Dendritic cell treated with granulocyte-macrophage colony-stimulating factor and Interleukin-4, amounts not matched to agents 40 ng/mL and 50 ng/mL, for 4 days (primary cell): ENCODE measurements at regions of chr15 and their contacts with region 1.

Region 1: DNA sequence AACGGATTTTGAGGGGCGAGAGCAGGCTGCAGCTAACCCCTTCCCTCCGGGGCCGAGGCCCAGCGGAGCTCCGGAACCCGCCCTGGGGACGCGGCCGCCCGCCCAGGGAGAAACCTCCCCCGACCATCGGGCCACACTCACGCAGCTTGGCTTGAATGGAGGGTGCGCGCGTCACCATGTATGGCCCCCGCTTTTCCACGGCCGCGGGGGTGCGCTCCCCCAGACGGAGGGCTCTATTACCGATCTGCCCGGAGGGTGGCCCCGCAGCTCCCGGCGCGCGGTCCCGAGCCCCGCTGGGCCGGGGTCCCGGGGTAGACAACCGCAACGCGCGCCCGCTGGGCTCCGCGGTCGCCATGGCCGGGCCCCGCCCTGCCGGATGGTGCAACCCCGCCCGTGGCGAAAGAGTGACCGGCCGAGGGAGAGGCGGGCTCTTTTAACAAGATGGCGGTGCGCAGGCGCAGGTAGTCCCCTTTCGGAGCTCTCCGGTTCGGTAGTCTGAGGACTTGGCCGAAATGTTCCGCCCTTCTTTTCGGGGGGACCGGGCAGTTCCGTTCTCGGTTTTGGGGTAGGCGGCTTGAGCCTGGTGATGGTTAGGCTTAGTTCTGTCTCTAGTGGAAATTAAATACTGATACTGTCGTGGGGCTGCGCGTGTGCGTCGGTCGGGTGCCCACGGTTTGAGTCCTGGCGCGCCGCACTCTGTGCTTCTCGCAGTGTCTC is at the start of gene FAM219B:
- H3K4me3 Mint-ChIP-seq: peak within 1 kb of the TSS; percentile 91
- H3K27ac Mint-ChIP-seq: peak within 1 kb of the TSS; percentile 87
- H3K4me1 Mint-ChIP-seq: peaks cover 49% of the 10 kb centered on the region
- H3K27me3 Mint-ChIP-seq: no peaks in the 10 kb centered on the region

Region 2: DNA sequence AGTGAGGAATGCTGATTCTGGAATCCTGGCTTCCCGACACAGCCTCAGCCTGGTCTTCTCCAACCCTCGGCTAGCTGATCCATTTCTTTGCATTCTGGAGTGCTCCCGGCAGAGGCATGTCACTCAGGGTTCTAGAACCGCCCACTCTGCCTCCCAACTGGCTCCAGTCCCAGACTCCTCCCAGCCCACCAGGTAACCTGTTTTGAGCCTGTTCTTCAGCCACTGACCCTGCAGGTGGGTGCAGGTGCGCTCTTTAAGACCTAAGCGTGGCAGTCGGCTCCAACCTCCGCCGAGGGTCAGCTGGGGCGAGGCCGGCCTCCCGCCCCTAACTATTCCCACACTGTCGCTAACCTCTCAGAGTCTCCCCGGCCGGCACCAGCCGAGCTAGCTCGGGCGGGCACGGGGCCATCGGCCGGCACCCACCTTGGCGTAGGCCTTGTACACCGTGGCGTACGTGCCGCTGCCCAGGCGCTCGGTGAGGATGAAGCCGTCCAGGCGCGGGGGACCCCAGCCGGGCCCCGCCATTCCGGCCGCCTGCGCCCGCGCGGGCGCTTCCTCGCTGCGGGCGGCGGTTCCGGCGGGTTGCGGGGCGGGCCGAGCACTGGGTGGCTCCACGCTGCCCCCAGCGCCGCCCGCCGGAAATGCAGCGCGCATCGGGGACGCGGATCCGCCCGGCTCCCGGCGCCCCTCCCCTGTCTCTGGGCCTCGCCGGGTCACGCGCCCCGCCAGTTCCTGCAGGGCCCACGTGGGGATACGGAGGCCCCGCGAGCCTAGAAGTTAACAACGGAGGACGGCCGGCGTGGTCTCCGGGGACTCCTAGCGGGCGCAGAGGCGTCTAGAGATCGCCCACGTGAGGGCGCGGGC is 63.8 kb before region 1 on chr15 and contains the start of gene ULK3:
- intact Hi-C with region 1: loop called (anchors 1 kb)
- H3K4me3 Mint-ChIP-seq: peak within 1 kb of the TSS; percentile 87
- H3K27ac Mint-ChIP-seq: peak within 1 kb of the TSS; percentile 83
- H3K4me1 Mint-ChIP-seq: peaks cover 42% of the 10 kb centered on the region
- H3K27me3 Mint-ChIP-seq: no peaks in the 10 kb centered on the region

Region 3: GRCh38 chr15:74866090-74866489 is 40.5 kb before region 1 on chr15:
- intact Hi-C with region 1: loop called (anchors 2 kb)
- H3K4me3 Mint-ChIP-seq: no peak overlapping the region
- H3K27ac Mint-ChIP-seq: peak overlapping the region; percentile 96
- H3K4me1 Mint-ChIP-seq: peaks cover 75% of the 10 kb centered on the region
- H3K27me3 Mint-ChIP-seq: no peaks in the 10 kb centered on the region